Dendritic cell treated with granulocyte-macrophage colony-stimulating factor and Interleukin-4, amounts not matched to agents 40 ng/mL and 50 ng/mL, for 4 days (primary cell): ENCODE measurements at regions of chr3 and their contacts with region 1.

Region 1: DNA sequence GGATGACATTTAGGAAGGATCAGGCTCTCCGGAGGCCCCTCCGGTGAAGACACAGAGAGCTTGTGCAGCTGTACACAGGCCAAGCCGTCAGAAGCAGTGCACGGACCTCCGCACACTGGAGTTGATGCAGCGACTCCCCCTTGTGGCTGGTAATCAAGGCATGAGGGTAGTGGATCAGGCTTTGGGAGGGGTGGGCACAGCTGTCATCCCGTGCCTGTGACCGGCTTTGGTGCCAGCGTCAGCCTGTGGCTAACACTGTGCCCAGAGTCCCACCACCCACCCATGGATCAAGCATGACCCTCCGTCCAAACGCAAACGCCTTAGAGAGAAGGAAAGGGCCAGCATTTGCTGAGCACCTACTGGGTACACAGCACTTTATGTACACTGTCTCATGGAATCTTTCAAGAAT is 8.2 kb upstream of the GRIP2 start:
- H3K4me3 Mint-ChIP-seq: no peak overlapping the region
- H3K27ac Mint-ChIP-seq: no peak overlapping the region
- H3K4me1 Mint-ChIP-seq: no peaks in the 10 kb centered on the region
- H3K27me3 Mint-ChIP-seq: peaks cover 50% of the 10 kb centered on the region

Region 2: GRCh38 chr3:14203521-14204079 is 344.7 kb before region 1 on chr3:
- intact Hi-C with region 1: loop called (anchors 1 kb)
- H3K4me3 Mint-ChIP-seq: no peak overlapping the region
- H3K27ac Mint-ChIP-seq: no peak overlapping the region
- H3K4me1 Mint-ChIP-seq: peaks cover 16% of the 10 kb centered on the region
- H3K27me3 Mint-ChIP-seq: no peaks in the 10 kb centered on the region

Region 3: DNA sequence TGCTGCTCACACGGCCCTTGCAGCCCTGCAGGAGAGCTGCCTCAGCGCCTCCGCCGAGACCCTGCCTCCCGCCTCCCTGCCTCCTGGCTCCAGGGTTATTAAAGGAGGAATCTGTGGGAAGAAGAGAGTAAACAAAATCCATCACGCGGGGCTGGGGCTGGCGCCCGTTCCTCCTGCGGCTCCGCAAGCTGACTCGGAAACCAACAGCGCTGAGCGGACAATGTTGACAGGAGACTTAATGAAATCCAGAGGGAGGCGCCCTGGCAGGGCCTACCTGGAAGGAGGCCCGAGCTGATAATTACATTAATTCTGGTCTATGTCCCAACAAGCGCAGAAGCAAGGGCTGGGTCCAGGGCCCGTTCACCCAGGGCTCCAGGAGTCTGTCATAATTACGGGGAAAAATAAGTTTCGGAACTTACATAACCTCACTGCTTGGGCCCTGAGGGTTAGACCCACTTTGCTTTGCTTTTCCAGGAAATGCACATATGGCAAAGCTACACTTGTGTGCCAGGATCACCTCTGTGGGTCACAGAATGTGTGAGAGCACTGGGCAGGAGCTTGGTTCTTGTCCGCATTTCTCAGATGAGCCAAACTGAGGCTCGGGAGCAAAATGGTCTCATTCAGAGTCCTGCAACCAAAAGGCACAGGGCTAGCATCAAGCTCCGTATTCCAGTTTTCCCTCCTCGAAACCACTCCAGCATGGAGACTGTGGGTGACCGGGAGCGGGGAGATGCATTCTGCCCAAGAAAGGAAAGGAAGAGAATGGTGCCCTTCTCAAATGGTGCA is 189.7 kb before region 1 on chr3:
- intact Hi-C with region 1: no loop called
- H3K4me3 Mint-ChIP-seq: no peak overlapping the region
- H3K27ac Mint-ChIP-seq: no peak overlapping the region
- H3K4me1 Mint-ChIP-seq: peaks cover 8% of the 10 kb centered on the region
- H3K27me3 Mint-ChIP-seq: peaks cover 34% of the 10 kb centered on the region